Dorsolateral prefrontal cortex (tissue), 120 donors: ENCODE measurements at regions of chr20 and their contacts with region 1.

Region 1: DNA sequence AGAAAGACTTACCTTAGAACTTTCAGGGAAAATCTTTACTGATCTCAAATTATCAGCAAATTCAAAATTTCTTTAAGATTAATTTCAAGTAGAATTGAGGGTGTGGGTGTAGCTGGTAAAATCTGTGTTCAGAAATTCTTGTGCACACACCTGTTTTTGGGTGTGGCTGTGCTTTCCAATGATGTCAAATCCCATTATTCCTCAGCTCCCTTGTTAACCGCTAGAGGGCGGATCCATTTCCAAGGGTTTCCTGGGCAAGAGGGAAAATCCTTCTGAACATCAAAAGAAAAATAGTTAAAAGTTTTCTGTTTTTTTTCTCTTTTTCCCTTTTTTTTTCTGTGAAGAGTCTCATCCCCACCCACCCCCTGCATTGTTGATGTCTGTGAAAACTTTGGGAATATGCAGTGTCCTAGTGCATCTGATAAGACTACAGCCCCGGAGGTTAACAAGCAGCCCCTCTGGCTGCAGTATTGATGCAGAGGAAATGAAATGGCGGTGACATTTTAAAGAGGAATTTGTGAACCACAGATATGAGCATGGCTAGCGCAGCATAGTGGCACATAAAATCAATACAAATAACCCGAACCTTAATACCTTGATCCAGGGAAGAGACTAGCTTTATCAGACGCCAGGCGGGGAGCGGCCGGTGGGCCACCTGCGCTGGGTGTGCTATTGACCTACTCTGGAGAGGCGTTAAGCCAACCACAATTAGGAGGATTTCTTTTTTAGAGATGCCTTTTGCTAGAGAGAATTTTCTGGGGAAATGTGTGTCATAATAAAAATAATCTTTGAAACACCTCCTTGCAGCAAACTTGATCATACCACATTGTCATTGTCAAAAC is 130.9 kb downstream of the FOXA2 start:
- DNase-seq: no peak
- H3K4me3 ChIP-seq: no peak overlapping the region
- H3K27ac ChIP-seq: no peak overlapping the region
- H3K27me3 ChIP-seq: peaks cover 0 to 43% (median 10%) of the 10 kb centered on the region in 45 donors
- CTCF ChIP-seq: peak in 55 of 56 donors; percentile 20 to 66 (median 48)

Region 2: GRCh38 chr20:22630701-22631100 is 177.2 kb after region 1 on chr20:
- intact Hi-C with region 1: no loop called
- DNase-seq: peak in 1 of 10 donors; percentile 13
- H3K4me3 ChIP-seq: no peak overlapping the region
- H3K27ac ChIP-seq: no peak overlapping the region
- H3K27me3 ChIP-seq: peaks cover 0 to 13% (median 0%) of the 10 kb centered on the region in 45 donors
- CTCF ChIP-seq: no peak

Region 3: DNA sequence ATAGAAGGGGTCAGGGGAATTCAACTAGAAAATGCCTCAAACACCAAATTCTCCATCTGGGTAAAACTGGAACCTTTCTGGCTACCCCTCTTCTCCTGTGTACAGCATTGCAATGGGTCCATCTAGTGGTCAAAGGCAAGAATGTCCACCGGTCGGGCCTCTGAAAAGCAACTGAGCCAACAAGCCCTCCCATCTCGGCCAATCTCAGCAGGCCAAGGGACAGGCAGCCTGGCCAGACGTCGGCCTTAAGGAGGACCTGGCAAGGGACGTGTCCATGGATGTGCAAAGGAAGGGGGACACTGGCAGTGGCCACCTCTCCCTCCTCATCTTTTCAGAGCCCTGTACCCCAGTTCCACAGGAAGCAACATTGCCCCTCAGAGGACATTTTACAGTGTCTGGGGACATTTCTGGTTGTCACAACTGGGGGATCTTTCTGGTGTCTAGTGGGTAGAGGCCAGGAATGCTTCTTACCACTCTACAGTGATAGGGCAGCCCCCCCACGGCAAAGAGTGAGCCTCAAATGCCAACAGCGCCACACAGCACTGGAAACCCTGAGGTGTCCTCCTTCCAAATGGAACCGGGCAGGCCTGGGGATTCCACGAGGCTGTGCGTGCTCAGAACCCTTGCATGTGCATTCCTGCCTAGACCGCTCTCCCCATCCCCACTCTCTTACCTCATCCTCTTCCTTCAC is 230.8 kb after region 1 on chr20:
- intact Hi-C with region 1: loop called in 1 of 2 experiments (anchors 10 kb)
- DNase-seq: peak; percentile 30 to 80 (median 64)
- H3K4me3 ChIP-seq: no peak overlapping the region
- H3K27ac ChIP-seq: no peak overlapping the region
- H3K27me3 ChIP-seq: peaks cover 0 to 4% (median 0%) of the 10 kb centered on the region in 45 donors
- CTCF ChIP-seq: peak; percentile 60 to 94 (median 85)